ENCODE measurements at regions of chr6 and their contacts with region 1.

Region 1: GRCh38 chr6:87929843-87930288 is 117.8 kb upstream of the SPACA1 start:
- DNase-seq: peak; percentile 80
- H3K4me3 ChIP-seq: no peak overlapping the region
- H3K27ac ChIP-seq: no peak overlapping the region
- H3K4me1 ChIP-seq: no peaks in the 10 kb centered on the region
- H3K27me3 ChIP-seq: no peaks in the 10 kb centered on the region
- CTCF ChIP-seq: peak; percentile 79

Region 2: DNA sequence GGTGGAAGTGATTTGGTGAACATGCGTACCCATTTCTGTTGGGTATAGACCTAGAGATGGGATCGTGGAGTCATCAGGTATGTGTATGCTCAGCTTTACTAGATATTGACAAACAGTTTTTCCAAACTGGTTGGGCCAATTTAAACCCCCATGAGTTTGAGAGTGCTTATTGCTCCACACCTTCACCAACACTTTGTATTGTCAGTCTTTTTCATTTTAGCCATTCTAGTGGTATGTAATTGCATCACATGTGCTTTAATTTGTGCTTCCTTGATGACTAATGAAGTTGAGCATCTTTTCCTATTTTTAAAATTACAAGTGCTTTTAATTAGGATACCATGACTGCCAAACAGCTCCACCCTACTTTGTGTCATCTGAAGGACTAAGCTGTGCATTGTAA is 69.0 kb before region 1 on chr6:
- intact Hi-C with region 1: no loop called
- DNase-seq: no peak
- H3K4me3 ChIP-seq: no peak overlapping the region
- H3K27ac ChIP-seq: no peak overlapping the region
- H3K4me1 ChIP-seq: no peaks in the 10 kb centered on the region
- H3K27me3 ChIP-seq: no peaks in the 10 kb centered on the region
- CTCF ChIP-seq: no peak

Region 3: GRCh38 chr6:88165844-88166492 is 236.1 kb after region 1 on chr6 and contains the start of gene CNR1:
- intact Hi-C with region 1: loop called (anchors 5 kb)
- DNase-seq: peak; percentile 81
- H3K4me3 ChIP-seq: peak within 1 kb of the TSS; percentile 52
- H3K27ac ChIP-seq: no peak within 1 kb of the TSS
- H3K4me1 ChIP-seq: peaks cover 3% of the 10 kb centered on the region
- H3K27me3 ChIP-seq: peaks cover 25% of the 10 kb centered on the region
- CTCF ChIP-seq: no peak
- total RNA-seq, gene CNR1: 0.82 to 2.9 TPM

Region 4: DNA sequence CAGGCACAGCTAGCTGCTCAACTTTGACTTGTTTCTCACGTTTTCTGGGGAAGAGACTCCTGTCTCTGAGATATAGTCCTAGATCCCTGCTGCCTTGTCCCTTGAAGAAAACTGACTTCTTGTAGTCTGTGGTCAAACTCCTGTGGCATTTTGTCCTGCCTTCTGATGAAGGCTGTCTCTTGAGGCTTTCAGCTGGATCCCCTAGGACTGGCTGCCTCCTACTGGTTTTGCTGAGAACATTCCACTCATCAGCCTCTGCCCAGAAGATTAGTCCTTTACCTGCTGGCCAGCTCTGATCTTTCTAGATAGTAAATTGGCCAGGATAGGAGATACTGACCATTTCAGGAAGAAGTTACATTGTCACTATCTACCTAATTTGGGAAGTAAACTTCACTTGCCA is 308.2 kb after region 1 on chr6:
- intact Hi-C with region 1: loop called (anchors 5 kb)
- DNase-seq: peak; percentile 20
- H3K4me3 ChIP-seq: no peak overlapping the region
- H3K27ac ChIP-seq: no peak overlapping the region
- H3K4me1 ChIP-seq: no peaks in the 10 kb centered on the region
- H3K27me3 ChIP-seq: no peaks in the 10 kb centered on the region
- CTCF ChIP-seq: peak; percentile 29

Region 5: DNA sequence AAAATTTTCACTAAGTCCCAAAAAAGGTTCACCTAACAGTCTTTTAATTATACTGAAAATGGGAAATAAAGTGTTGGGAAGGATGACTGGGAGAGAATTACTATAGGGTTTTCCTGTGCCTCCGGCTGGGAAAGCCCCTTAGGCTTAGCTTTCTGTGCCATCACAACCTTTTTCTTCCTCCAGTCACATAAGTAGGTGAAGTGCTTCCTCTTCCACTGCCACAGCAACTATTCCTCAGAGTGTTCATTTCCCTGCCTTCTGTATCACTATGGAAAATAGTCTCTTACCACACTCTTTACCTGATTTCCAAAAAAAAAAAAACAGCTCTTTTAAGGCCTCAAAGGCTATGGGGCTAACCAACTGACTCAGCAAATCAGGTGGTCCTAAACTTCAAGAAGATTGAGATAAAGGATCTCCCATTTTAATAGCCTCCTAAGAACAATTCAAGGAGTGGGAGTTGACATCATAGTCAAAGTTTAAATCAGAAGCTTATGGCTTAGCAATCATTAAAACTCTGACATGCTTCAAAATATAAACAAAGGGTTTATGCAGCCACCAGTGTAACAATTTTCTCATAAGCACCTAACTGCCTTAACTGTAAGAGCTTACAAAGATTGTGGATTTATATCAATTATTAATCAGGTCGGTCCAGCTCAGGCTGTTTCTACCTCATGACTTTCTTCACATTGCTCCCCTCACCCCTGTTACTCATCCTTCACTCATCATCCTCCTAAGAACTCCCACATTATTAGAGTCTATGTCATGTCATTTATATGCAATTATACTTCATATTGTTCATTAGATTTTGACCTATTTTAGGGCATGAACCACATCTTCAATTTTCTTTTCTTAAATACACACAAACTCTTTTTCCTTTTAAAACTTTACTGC is 938.2 kb after region 1 on chr6:
- intact Hi-C with region 1: loop called (anchors 5 kb)
- DNase-seq: no peak
- H3K4me3 ChIP-seq: no peak overlapping the region
- H3K27ac ChIP-seq: no peak overlapping the region
- H3K4me1 ChIP-seq: no peaks in the 10 kb centered on the region
- H3K27me3 ChIP-seq: no peaks in the 10 kb centered on the region
- CTCF ChIP-seq: no peak

Measured in colonic mucosa (tissue), 4 donors.